ENCODE measurements at regions of chr7 and their contacts with region 1.

Region 1: DNA sequence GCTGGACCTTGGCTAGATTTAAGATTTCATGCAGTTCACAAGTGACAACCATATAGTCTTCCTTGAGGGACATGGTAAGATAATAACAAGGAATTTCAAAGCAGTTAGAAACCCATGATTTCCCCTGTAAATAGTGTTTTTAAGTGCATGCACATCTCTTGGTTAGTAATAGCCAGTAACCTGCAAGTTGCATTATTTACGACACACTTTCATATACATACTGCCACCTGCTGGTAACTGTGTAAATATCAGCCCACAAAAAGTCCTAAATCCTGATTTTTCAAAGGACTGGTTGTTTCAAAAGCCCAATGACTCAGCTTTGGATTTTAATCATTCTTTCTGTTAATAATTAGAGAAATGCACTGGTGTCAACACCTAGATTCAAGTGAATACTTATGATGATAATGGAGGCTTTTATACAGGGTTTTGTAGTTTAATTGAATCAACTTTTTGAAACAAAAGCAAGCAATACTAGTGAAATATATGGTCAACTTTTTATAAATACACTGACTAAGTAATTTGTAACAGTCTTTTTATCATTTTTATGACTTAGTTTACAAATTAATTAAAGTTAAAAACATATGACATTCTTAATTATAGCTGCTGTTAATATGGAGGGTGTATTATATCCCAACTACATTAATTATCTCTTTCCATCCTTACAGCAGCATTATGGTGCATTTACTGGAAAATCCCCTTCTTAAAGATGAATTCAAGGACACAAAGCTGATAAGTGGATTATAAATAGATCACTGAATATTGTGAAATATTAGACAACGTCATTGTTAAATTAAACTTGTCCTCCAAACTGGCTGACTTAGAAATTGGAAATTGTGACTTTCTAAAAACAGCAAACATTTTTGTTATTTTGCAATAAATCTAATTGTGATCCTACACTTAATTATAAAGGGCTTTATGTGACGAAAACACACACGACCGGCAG is 367.7 kb upstream of the SEMA3D start:
- DNase-seq: no peak
- H3K4me3 Mint-ChIP-seq: no peak overlapping the region
- H3K27ac Mint-ChIP-seq: no peak overlapping the region
- H3K4me1 Mint-ChIP-seq: no peaks in the 10 kb centered on the region
- H3K27me3 Mint-ChIP-seq: no peaks in the 10 kb centered on the region

Region 2: DNA sequence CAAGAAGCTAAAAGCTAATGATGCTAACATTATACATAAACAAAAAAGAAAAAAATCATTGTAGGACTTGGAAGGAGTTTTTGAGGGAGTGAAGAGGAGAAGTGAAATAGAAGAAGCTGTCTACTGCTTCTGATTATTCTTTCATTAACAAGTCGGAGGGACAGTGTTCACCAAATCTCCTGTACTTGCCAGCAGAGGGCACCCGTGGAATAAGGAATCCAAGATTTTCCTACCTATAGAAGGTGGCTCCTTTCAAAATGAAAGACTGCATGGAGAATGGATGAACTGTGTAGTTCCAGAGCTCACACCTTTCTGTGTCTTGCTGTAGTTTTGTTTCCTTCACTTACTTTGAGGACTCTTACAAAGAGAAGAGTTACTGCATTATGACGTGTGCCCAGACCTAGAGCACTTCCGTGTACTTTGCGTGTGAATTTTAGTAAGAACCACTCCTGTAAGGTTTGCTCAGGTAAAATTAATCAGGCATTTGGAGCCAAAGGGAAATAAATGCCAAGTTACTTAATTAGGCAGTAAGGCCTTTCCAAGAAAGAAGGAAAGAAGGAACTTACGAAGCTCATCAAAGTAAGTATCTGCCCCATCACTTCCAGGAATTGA is 512.8 kb before region 1 on chr7:
- CTCF ChIA-PET with region 1: interaction called, 10 read pairs
- DNase-seq: peak; percentile 35
- H3K4me3 Mint-ChIP-seq: no peak overlapping the region
- H3K27ac Mint-ChIP-seq: no peak overlapping the region
- H3K4me1 Mint-ChIP-seq: no peaks in the 10 kb centered on the region
- H3K27me3 Mint-ChIP-seq: no peaks in the 10 kb centered on the region

Measured in activated naive CD4-positive, alpha-beta T cell treated with anti-CD3 and anti-CD28 coated beads, Interleukin-2, amount 10 ng/mL, durations not matched to agents 7 days and 5 days (primary cell).